Lower leg skin (tissue), 4 donors: ENCODE measurements at regions of chr5 and their contacts with region 1.

Region 1: GRCh38 chr5:75511435-75512384 is at the starts of genes CERT1 and POLK:
- DNase-seq: peak; percentile 97 to 99
- H3K4me3 ChIP-seq: peak within 1 kb of the TSS; percentile 73
- CTCF ChIP-seq: no peak
- POLR2A ChIP-seq: peak in 1 of 2 donors; percentile 55
- total RNA-seq, gene CERT1: 23.3 to 32.3 (median 30.6) TPM
- total RNA-seq, gene POLK: 18.0 to 24.9 (median 19.7) TPM

Region 2: GRCh38 chr5:73883646-73884045 is 1628.1 kb before region 1 on chr5:
- intact Hi-C with region 1: no loop called
- DNase-seq: no peak
- H3K4me3 ChIP-seq: no peak overlapping the region
- CTCF ChIP-seq: no peak
- POLR2A ChIP-seq: no peak

Region 3: DNA sequence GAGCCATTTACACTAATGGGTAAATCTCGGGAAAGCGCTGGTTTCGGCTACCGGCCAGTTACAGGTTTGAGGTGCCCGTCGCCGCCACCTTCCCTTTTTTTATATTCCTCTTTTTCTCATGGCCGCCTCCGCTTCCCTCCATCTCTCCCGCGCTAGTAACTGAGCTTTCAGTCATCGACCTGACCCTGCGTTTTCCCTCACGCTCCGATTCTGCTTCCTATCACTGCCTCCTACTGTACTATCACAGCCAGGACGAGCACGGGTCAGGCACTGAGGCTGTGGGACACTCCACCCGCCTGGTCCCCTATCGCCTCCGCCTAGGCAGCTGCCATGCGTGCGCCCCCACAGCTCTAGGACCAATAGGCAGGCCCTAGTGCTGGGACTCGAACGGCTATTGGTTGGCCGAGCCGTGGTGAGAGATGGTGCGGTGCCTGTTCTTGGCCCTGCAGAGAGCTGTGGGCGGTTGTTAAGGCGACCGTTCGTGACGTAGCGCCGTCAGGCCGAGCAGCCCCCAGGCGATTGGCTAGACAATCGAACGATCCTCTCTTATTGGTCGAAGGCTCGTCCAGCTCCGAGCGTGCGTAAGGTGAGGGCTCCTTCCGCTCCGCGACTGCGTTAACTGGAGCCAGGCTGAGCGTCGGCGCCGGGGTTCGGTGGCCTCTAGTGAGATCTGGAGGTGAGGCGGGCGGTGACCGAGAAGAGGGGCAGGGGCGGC is 174.9 kb before region 1 on chr5 and contains the start of gene HMGCR:
- intact Hi-C with region 1: loop called (anchors 10 kb)
- DNase-seq: peak; percentile 99 to 100
- H3K4me3 ChIP-seq: peak within 1 kb of the TSS; percentile 93
- CTCF ChIP-seq: peak in 1 of 3 donors; percentile 7
- POLR2A ChIP-seq: no peak
- total RNA-seq, gene HMGCR: 101 to 119 (median 103) TPM

Region 4: GRCh38 chr5:75389430-75389829 is 122.3 kb before region 1 on chr5:
- intact Hi-C with region 1: no loop called
- DNase-seq: no peak
- H3K4me3 ChIP-seq: no peak overlapping the region
- CTCF ChIP-seq: no peak
- POLR2A ChIP-seq: no peak